ENCODE measurements at regions of chr7 and their contacts with region 1.

Region 1: DNA sequence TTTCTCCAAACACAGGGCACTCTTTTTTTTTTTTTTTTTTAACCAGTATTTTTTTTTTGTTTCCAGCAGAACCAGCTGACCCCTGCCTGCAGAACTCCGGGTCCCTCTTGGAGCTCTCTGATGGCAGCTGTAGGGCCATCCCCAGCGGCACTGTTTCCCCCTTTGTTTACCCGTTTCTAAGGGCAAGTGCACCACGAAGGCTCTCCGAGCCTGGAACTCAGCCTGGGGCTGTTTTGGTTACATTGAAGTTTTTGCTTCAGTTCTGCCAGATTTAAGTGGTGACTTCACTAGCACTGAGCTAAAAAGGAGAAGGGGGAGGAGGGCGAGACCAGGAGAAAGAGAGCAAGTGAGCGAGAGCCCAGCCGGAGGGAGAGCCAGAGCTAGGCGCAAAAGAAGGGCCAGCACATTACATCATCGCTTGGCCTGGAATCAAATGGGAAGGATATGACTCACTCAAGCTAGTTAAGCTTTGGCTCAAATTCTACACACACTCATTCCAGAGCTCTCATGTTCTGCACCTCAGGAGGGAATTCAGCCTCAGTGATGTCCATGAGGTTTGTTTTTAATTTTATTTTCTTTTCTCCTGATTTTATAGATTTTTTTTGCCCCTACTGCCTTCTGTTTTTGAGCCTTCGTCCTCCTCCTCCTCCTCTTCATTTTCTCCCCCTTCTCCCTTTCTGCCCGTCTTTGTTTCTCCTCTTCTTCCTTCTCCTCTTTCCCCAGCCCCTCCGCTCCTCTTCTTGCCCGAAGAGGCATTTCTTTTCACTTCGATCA is 272.3 kb downstream of the TRIL start:
- DNase-seq: peak; percentile 64 to 97 (median 94)
- H3K4me3 ChIP-seq: peak overlapping the region; percentile 26 to 81 (median 64)
- H3K27ac ChIP-seq: peak overlapping the region; percentile 67 to 97 (median 91)
- H3K27me3 ChIP-seq: no peaks in the 10 kb centered on the region
- CTCF ChIP-seq: peak in 23 of 56 donors; percentile 7 to 46 (median 20)

Region 2: GRCh38 chr7:28298870-28299518 is 386.8 kb before region 1 on chr7:
- intact Hi-C with region 1: loop called in 1 of 2 experiments (anchors 5 kb)
- DNase-seq: peak in 6 of 10 donors; percentile 43 to 63 (median 48)
- H3K4me3 ChIP-seq: peak overlapping the region in 3 of 59 donors; percentile 4 to 24 (median 17)
- H3K27ac ChIP-seq: peak overlapping the region in 30 of 59 donors; percentile 0 to 72 (median 28)
- H3K27me3 ChIP-seq: no peaks in the 10 kb centered on the region
- CTCF ChIP-seq: peak; percentile 33 to 80 (median 62)

Region 3: GRCh38 chr7:28408960-28409715 is 276.7 kb before region 1 on chr7:
- intact Hi-C with region 1: loop called (anchors 2 kb)
- DNase-seq: peak; percentile 89 to 100 (median 96)
- H3K4me3 ChIP-seq: peak overlapping the region; percentile 50 to 90 (median 73)
- H3K27ac ChIP-seq: peak overlapping the region; percentile 30 to 97 (median 93)
- H3K27me3 ChIP-seq: peaks cover 0 to 32% (median 4%) of the 10 kb centered on the region in 45 donors
- CTCF ChIP-seq: no peak

Region 4: GRCh38 chr7:28608731-28609130 is 77.1 kb before region 1 on chr7:
- intact Hi-C with region 1: no loop called
- DNase-seq: no peak
- H3K4me3 ChIP-seq: no peak overlapping the region
- H3K27ac ChIP-seq: no peak overlapping the region
- H3K27me3 ChIP-seq: peaks cover 0 to 5% (median 0%) of the 10 kb centered on the region in 45 donors
- CTCF ChIP-seq: no peak

Region 5: GRCh38 chr7:28708033-28708951 is 22.5 kb after region 1 on chr7:
- intact Hi-C with region 1: loop called in 1 of 2 experiments (anchors 2 kb)
- DNase-seq: peak in 8 of 10 donors; percentile 59 to 84 (median 79)
- H3K4me3 ChIP-seq: peak overlapping the region in 57 of 59 donors; percentile 6 to 63 (median 39)
- H3K27ac ChIP-seq: peak overlapping the region; percentile 18 to 98 (median 85)
- H3K27me3 ChIP-seq: no peaks in the 10 kb centered on the region
- CTCF ChIP-seq: peak in 3 of 56 donors; percentile 12 to 29 (median 15)

Region 6: GRCh38 chr7:28748933-28749584 is 63.2 kb after region 1 on chr7:
- intact Hi-C with region 1: loop called (anchors 2 to 5 kb)
- DNase-seq: no peak
- H3K4me3 ChIP-seq: peak overlapping the region in 1 of 59 donors; percentile 12
- H3K27ac ChIP-seq: peak overlapping the region in 57 of 59 donors; percentile 2 to 98 (median 83)
- H3K27me3 ChIP-seq: no peaks in the 10 kb centered on the region
- CTCF ChIP-seq: no peak

Measured in dorsolateral prefrontal cortex (tissue), 120 donors.